Activated B cell treated with CpG ODN at 0.5 μM for 24 hours (primary cell): ENCODE measurements at regions of chr1 and their contacts with region 1.

Region 1: GRCh38 chr1:11037740-11038182 is 9.3 kb downstream of the MASP2 start:
- DNase-seq: peak; percentile 72
- ATAC-seq: peak; percentile 96
- H3K4me3 Mint-ChIP-seq: no peak overlapping the region
- H3K27ac Mint-ChIP-seq: no peak overlapping the region
- H3K4me1 Mint-ChIP-seq: peaks cover 4% of the 10 kb centered on the region
- H3K27me3 Mint-ChIP-seq: peaks cover 6% of the 10 kb centered on the region
- CTCF ChIP-seq: peak; percentile 57

Region 2: DNA sequence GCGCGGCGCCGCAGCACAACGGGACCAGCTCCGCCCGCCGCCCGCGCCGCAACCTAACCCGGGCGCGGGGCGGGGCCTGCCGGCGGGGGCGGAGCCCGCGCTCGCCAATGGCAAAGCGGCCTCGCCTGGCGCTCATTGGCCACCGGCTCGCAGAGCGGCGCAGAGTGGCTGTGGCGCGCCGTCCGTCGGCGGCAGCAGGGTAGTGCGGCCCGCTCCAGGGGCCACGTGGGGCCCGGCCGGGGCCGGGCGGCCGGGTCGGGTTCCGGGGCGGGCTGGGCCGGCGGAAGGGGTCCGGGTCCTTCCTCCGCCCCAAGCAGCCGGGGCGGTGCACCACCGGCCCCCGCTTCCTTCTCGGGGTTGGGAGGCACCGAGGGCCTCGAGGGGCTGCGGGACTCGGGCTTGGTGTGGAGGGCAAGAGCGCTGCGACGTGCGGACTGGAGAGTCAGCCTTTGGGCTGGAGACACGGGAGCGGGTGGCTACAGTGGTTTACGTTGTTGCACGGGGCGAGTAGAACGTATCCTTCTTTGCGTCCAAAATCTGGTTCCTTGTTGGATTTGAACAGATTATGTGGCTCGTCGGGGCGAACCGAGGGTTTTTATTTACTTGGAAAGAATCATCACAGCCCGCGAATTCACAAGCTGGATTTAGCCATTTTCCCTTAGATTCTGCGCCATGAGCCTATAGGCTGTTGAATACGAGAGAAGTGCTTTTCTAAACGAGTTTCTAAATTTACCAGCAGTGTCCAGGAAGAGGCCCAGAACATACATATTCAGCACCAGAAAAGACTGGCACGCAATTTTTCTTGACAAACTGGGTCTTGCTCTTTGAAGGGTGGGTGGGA is 22.4 kb after region 1 on chr1 and contains the start of gene SRM:
- CTCF ChIA-PET with region 1: interaction called, 13 read pairs
- POLR2A ChIA-PET with region 1: no interaction called
- intact Hi-C with region 1: loop called (anchors 1 kb)
- DNase-seq: peak; percentile 96
- ATAC-seq: peak; percentile 98
- H3K4me3 Mint-ChIP-seq: peak within 1 kb of the TSS; percentile 95
- H3K27ac Mint-ChIP-seq: peak within 1 kb of the TSS; percentile 86
- H3K4me1 Mint-ChIP-seq: peaks cover 18% of the 10 kb centered on the region
- H3K27me3 Mint-ChIP-seq: no peaks in the 10 kb centered on the region
- CTCF ChIP-seq: no peak
- total RNA-seq, gene SRM: 106 and 119 TPM in 2 replicates

Region 3: DNA sequence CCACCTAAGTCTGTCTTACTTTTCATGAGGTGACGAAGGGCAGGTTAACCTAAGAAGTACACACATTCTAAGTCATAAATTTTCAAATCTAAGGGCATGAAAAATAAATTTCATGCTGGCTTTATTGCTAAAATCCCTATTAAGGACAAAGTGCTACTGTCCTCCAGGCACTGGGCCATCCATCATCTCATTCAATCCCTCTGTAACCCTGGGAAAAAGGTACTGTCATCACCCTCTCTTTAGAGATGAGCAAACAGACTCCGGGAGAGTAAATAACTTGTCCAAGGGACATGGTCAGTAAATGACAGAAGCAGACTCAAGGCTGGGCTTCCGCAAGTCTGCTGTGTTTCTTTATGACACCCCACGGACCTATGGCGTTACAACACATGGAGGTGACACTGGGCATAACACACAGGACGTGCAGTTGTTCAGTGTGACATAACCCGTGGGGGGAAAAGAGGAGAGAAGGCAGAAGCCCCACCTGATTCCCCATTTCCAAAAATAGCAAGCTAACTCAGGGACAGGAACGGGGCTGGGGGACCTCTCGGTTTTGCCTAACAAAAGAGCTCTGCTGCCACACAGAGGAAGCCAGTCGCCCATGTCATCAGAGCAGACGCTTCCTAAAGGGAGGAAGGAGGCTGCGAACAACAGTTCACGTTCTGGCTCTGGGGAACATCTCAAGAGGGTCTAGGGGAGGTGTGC is 34.6 kb after region 1 on chr1:
- CTCF ChIA-PET with region 1: interaction called, 24 read pairs
- POLR2A ChIA-PET with region 1: interaction called, 5 read pairs
- intact Hi-C with region 1: loop called (anchors 2 kb)
- DNase-seq: no peak
- ATAC-seq: peak; percentile 40
- H3K4me3 Mint-ChIP-seq: no peak overlapping the region
- H3K27ac Mint-ChIP-seq: peak overlapping the region; percentile 30
- H3K4me1 Mint-ChIP-seq: peaks cover 5% of the 10 kb centered on the region
- H3K27me3 Mint-ChIP-seq: no peaks in the 10 kb centered on the region
- CTCF ChIP-seq: no peak

Region 4: GRCh38 chr1:11248155-11248554 is 210.4 kb after region 1 on chr1:
- CTCF ChIA-PET with region 1: interaction called, 17 read pairs
- POLR2A ChIA-PET with region 1: no interaction called
- intact Hi-C with region 1: no loop called
- DNase-seq: no peak
- ATAC-seq: no peak
- H3K4me3 Mint-ChIP-seq: no peak overlapping the region
- H3K27ac Mint-ChIP-seq: no peak overlapping the region
- H3K4me1 Mint-ChIP-seq: no peaks in the 10 kb centered on the region
- H3K27me3 Mint-ChIP-seq: no peaks in the 10 kb centered on the region
- CTCF ChIP-seq: no peak

Region 5: GRCh38 chr1:11645670-11646265 is 608.0 kb after region 1 on chr1:
- CTCF ChIA-PET with region 1: interaction called, 101 read pairs
- POLR2A ChIA-PET with region 1: no interaction called
- intact Hi-C with region 1: loop called (anchors 1 kb)
- DNase-seq: peak; percentile 66
- ATAC-seq: peak; percentile 48
- H3K4me3 Mint-ChIP-seq: no peak overlapping the region
- H3K27ac Mint-ChIP-seq: no peak overlapping the region
- H3K4me1 Mint-ChIP-seq: peaks cover 15% of the 10 kb centered on the region
- H3K27me3 Mint-ChIP-seq: peaks cover 2% of the 10 kb centered on the region
- CTCF ChIP-seq: no peak

Region 6: GRCh38 chr1:11749203-11749689 is 711.5 kb after region 1 on chr1:
- CTCF ChIA-PET with region 1: interaction called, 3 read pairs
- POLR2A ChIA-PET with region 1: no interaction called
- intact Hi-C with region 1: loop called (anchors 1 kb)
- DNase-seq: peak; percentile 27
- ATAC-seq: peak; percentile 99
- H3K4me3 Mint-ChIP-seq: no peak overlapping the region
- H3K27ac Mint-ChIP-seq: peak overlapping the region; percentile 36
- H3K4me1 Mint-ChIP-seq: peaks cover 6% of the 10 kb centered on the region
- H3K27me3 Mint-ChIP-seq: no peaks in the 10 kb centered on the region
- CTCF ChIP-seq: no peak

Region 7: GRCh38 chr1:11893907-11894251 is 856.1 kb after region 1 on chr1:
- CTCF ChIA-PET with region 1: interaction called, 4 read pairs
- POLR2A ChIA-PET with region 1: no interaction called
- intact Hi-C with region 1: loop called (anchors 2 kb)
- DNase-seq: peak; percentile 63
- ATAC-seq: peak; percentile 84
- H3K4me3 Mint-ChIP-seq: no peak overlapping the region
- H3K27ac Mint-ChIP-seq: no peak overlapping the region
- H3K4me1 Mint-ChIP-seq: no peaks in the 10 kb centered on the region
- H3K27me3 Mint-ChIP-seq: peaks cover 17% of the 10 kb centered on the region
- CTCF ChIP-seq: no peak